Left lung (tissue), 14 donors: ENCODE measurements at regions of chr19 and their contacts with region 1.

Region 1: DNA sequence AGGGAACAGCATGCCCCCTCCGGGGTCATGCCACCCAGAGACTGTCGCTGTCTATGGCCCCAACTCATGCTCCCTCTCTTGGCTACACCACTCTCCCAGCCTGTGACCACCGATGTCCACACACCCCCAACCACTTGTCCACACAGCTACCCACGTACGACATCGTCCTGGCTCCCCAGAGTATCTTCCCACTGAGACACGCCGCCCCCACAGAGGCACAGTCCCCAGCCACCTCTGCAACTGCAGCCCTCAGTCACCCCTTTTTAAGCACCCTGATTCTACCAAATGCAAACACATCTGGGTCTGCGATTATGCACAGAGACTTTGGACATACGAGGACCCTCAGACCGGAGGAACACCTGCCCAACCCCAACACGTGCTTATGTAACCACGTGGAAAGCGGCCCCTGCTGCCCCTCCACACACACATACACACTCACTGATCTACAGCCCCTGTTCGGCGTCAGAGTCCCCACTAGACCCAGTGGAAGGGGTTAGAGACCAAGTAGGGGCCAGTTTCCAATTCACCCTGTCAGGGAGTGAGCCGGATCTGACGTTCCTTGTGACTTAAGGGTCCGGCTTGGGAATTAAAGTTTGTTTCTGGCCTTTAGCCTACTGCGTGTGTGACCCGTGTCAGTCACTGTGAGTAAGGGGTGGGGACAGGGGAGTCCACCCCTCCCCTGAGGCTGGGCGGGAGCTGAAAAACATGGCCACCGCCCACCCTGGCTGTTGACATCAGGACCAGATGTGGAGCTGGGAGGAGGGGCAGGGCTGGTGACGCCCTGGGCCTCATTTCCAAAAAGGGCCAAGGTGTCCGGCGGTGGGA is 11.9 kb upstream of the AXL start:
- DNase-seq: peak in 1 of 4 donors; percentile 36
- ATAC-seq: no peak
- H3K4me3 ChIP-seq: no peak overlapping the region
- H3K27ac ChIP-seq: no peak overlapping the region
- H3K4me1 ChIP-seq: no peaks in the 10 kb centered on the region
- H3K27me3 ChIP-seq: no peaks in the 10 kb centered on the region
- CTCF ChIP-seq: no peak

Region 2: DNA sequence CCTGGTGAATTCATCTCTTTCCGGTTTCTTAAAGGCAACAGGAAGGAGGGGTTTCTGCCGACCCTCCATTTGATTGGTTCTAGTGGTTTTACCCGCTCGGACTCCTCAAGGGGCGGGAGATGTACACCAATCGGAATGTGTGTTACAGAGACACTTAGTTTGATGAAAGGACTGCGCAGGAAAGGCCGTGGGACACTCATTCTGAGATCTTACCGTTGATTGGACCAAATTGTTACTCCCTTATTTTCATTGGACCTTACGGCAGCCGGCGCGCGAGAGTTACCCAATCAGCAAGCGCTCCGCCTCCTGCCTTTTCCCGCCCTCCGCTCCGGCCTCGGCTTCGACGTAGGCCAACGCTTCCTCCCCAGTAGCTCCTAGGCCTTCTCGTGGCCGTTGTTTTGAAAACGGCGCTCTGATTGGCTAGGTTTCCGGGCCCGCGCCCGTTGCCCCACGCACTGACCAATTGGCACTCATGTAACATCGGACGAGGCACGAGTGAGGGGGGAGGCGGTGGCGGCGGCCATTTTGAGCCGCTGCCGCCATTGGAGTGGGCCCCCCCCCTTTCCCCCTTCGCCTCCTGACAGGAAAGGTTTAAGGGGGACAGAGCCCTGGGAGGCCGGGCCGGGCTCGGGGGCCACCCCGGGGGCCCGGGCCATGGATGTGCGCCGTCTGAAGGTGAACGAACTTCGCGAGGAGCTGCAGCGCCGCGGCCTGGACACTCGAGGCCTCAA is 56.9 kb after region 1 on chr19 and contains the start of gene HNRNPUL1:
- intact Hi-C with region 1: loop called in 1 of 2 experiments (anchors 5 kb)
- DNase-seq: peak; percentile 95 to 100 (median 100)
- ATAC-seq: peak; percentile 80
- H3K4me3 ChIP-seq: peak within 1 kb of the TSS; percentile 84 to 96
- H3K27ac ChIP-seq: peak within 1 kb of the TSS; percentile 95 to 99
- H3K4me1 ChIP-seq: peaks cover 20 to 38% of the 10 kb centered on the region in 2 donors
- H3K27me3 ChIP-seq: no peaks in the 10 kb centered on the region
- CTCF ChIP-seq: no peak
- polyA plus RNA-seq, gene HNRNPUL1: 209 to 240 (median 228) TPM

Region 3: GRCh38 chr19:41308392-41309179 is 101.4 kb after region 1 on chr19:
- intact Hi-C with region 1: loop called in 1 of 2 experiments (anchors 5 kb)
- DNase-seq: peak; percentile 90 to 94 (median 92)
- ATAC-seq: peak; percentile 82
- H3K4me3 ChIP-seq: peak overlapping the region in 1 of 2 donors; percentile 85
- H3K27ac ChIP-seq: peak overlapping the region; percentile 96 to 98
- H3K4me1 ChIP-seq: peaks cover 28 to 67% of the 10 kb centered on the region in 2 donors
- H3K27me3 ChIP-seq: no peaks in the 10 kb centered on the region
- CTCF ChIP-seq: peak; percentile 93 to 98